Activated CD4-positive, alpha-beta memory T cell treated with anti-CD3 and anti-CD28 coated beads, Interleukin-2, amount 10 ng/mL, durations not matched to agents 7 days and 5 days (primary cell): ENCODE measurements at regions of chr4 and their contacts with region 1.

Region 1: DNA sequence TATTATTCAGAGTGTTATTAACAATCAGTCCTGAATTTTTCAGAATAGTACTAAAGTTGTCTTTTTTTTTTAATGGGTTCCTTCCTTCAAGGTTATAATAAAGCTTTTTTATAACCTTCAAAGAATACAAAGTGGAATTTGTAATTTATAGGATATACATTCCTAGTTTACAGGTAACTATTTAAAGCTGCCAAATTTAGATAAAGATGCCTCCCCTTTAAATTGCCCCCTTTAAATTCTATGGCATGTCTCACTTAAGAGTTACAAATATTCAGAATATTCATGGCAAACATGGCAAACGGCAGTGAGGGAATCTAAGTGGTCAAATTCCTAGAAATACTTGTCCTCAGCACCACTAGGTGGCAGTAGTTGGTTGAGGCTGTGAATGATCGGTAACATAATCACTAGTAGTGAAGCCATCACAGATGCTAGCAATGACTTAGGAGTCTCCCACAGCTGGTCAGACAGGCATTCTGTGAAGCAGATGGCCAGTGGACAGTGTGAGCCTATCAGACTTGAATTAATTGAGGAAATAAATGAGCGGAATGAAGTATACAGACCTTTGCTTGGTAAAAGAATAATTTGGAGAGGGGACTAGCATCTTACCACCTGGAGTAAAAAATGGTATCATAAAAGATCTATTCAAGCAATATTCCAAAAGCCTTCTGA is 86.4 kb downstream of the CBR4 start:
- DNase-seq: peak; percentile 54
- H3K4me3 Mint-ChIP-seq: no peak overlapping the region
- H3K27ac Mint-ChIP-seq: no peak overlapping the region
- H3K4me1 Mint-ChIP-seq: no peaks in the 10 kb centered on the region
- H3K27me3 Mint-ChIP-seq: no peaks in the 10 kb centered on the region

Region 2: DNA sequence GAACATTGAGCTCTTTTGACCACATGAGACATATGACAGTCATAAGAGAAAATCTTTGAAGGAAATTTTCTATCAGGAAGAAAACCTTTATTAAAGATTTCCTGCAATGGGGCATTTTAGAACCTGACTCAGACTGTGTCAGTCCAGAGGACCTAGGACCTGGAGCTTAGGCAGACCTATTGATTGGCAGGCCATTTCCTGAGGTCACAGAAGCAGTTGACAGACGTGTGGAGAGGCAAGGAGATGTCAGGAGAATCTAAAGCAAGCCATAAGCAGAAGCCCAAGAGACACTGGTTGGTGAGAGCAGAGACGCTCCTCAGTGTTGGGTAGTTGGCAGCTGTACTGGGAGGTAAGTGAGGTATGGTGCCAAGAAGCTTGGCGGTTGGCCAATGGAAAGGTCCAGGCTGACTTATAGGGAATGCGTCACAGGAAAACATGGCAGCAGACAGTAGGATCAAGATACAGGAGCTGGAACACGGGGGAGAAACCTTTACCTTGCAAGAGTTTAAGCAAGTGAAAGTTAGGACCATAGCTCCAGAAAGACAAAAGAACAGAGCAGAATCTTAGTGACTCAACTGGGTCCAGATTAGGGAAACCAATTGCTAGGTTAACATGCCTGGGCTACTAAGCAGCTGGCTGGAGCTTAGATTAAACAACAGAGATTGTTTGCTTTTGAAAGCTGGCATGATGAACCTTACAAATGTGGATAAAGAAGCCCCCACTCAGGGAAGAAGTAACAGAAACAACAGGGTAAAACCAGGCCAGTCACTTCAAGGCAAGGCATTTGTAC is 408.2 kb before region 1 on chr4:
- CTCF ChIA-PET with region 1: interaction called, 10 read pairs
- POLR2A ChIA-PET with region 1: no interaction called
- DNase-seq: no peak
- H3K4me3 Mint-ChIP-seq: no peak overlapping the region
- H3K27ac Mint-ChIP-seq: no peak overlapping the region
- H3K4me1 Mint-ChIP-seq: peaks cover 18% of the 10 kb centered on the region
- H3K27me3 Mint-ChIP-seq: peaks cover 7% of the 10 kb centered on the region

Region 3: GRCh38 chr4:168710353-168710946 is 213.2 kb before region 1 on chr4:
- CTCF ChIA-PET with region 1: interaction called, 12 read pairs
- POLR2A ChIA-PET with region 1: no interaction called
- DNase-seq: no peak
- H3K4me3 Mint-ChIP-seq: no peak overlapping the region
- H3K27ac Mint-ChIP-seq: no peak overlapping the region
- H3K4me1 Mint-ChIP-seq: peaks cover 2% of the 10 kb centered on the region
- H3K27me3 Mint-ChIP-seq: peaks cover 5% of the 10 kb centered on the region

Region 4: DNA sequence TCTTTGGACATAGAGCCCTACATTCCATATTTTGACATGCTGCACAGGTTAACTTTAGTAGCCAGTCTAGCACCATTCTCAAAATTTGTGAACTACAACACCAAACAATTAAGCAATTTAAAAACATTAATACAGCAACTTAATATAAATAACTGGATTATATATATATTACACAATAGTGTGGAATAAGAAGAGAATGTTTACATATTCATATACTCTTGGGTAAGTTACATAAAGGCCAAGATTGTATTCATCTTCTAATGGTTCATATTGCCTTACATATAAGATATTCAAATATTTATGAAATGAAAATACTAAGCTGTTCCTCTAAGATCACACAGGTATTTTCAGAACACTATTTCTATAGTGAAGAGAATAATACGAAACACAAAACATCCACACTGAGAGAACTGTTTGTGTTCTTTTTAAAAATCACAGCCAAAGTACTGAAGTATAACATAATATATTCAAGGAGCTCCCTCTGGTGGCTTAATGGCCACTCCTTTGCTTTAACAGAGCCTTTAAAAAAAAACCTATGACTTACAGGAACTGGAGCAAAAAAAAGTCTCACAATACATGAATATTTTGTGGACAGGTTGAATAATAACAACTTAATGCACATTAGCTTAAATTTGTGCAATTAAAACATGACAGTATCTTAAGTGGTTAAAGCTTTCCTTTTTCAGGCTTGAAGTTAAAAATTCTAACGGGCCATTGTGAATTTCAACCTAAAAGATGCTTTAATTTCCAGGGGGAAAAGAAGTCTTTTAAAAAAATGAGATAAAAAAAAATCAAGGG is 642.6 kb after region 1 on chr4:
- CTCF ChIA-PET with region 1: interaction called, 12 read pairs
- POLR2A ChIA-PET with region 1: no interaction called
- DNase-seq: no peak
- H3K4me3 Mint-ChIP-seq: no peak overlapping the region
- H3K27ac Mint-ChIP-seq: peak overlapping the region; percentile 44
- H3K4me1 Mint-ChIP-seq: peaks cover 6% of the 10 kb centered on the region
- H3K27me3 Mint-ChIP-seq: no peaks in the 10 kb centered on the region